ENCODE measurements at regions of chr11 and their contacts with region 1.

Region 1: DNA sequence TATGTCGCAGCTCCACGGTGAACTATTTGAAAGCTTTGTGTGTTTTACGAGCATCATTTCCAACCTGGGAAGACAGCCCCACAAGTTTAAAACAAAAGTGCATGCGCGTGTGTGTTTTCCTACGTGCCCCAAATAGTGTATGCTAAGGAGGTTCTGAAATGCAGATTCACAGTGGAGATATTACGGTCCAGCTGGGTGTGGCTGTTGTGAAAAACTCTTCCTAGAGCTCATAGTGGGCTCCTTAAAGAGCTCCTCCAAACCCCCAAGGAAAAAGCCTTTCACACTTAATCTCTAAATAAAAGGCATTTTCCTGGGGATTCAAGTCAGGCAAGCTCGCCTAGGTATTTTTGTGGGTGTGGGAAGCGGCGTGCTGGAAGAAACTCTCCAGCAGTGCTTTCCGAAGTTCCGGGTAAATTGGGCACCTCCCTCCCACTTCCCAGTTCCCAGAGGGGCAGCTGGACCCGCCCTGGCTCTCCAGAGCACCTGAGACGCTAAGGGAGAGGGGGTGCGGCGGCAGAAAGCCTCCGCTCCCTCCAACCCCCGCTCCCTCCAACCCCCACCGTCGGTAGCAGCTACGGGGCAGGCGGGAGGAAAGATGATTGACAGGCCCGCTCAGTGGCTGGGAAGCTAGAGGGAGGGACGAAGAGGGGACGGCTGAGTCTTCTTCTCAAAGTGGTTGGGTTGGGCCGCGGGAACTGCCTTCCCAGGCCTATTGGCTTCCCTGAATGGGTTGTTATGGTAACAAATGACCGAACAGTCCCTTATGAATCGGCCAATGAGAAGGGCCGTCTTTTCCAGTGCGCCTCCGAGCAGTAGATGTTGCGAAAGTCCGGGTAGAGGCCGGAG is 558 bp upstream of the PCF11 start:
- DNase-seq: peak; percentile 100
- ATAC-seq: peak; percentile 89
- H3K4me3 ChIP-seq: peak overlapping the region; percentile 75
- H3K27ac ChIP-seq: peak overlapping the region; percentile 76
- H3K4me1 ChIP-seq: peaks cover 12% of the 10 kb centered on the region
- H3K27me3 ChIP-seq: no peaks in the 10 kb centered on the region
- CTCF ChIP-seq: no peak

Region 2: GRCh38 chr11:82858556-82859091 is 297.7 kb before region 1 on chr11:
- CTCF ChIA-PET with region 1: no interaction called
- POLR2A ChIA-PET with region 1: no interaction called
- intact Hi-C with region 1: loop called (anchors 5 kb)
- DNase-seq: peak; percentile 98
- ATAC-seq: peak; percentile 80
- H3K4me3 ChIP-seq: peak overlapping the region; percentile 55
- H3K27ac ChIP-seq: peak overlapping the region; percentile 74
- H3K4me1 ChIP-seq: peaks cover 46% of the 10 kb centered on the region
- H3K27me3 ChIP-seq: no peaks in the 10 kb centered on the region
- CTCF ChIP-seq: no peak

Region 3: GRCh38 chr11:83051760-83052671 is 104.4 kb before region 1 on chr11:
- CTCF ChIA-PET with region 1: no interaction called
- POLR2A ChIA-PET with region 1: interaction called, 3 read pairs
- intact Hi-C with region 1: loop called (anchors 1 kb)
- DNase-seq: peak; percentile 97
- ATAC-seq: peak; percentile 81
- H3K4me3 ChIP-seq: peak overlapping the region; percentile 34
- H3K27ac ChIP-seq: peak overlapping the region; percentile 91
- H3K4me1 ChIP-seq: peaks cover 71% of the 10 kb centered on the region
- H3K27me3 ChIP-seq: no peaks in the 10 kb centered on the region
- CTCF ChIP-seq: no peak

Region 4: GRCh38 chr11:83181815-83182214 is 25.4 kb after region 1 on chr11:
- CTCF ChIA-PET with region 1: no interaction called
- POLR2A ChIA-PET with region 1: interaction called, 5 read pairs
- intact Hi-C with region 1: loop called (anchors 1 kb)
- DNase-seq: peak; percentile 41
- ATAC-seq: peak; percentile 80
- H3K4me3 ChIP-seq: no peak overlapping the region
- H3K27ac ChIP-seq: peak overlapping the region; percentile 14; the same call in 1 of the 2 replicates
- H3K4me1 ChIP-seq: no peaks in the 10 kb centered on the region; the same call in 1 of the 2 replicates
- H3K27me3 ChIP-seq: no peaks in the 10 kb centered on the region
- CTCF ChIP-seq: no peak

Region 5: GRCh38 chr11:83285771-83286528 is 129.6 kb after region 1 on chr11 and contains the start of gene CCDC90B:
- CTCF ChIA-PET with region 1: interaction called, 13 read pairs
- POLR2A ChIA-PET with region 1: no interaction called
- intact Hi-C with region 1: no loop called
- DNase-seq: peak; percentile 99
- ATAC-seq: peak; percentile 85
- H3K4me3 ChIP-seq: peak within 1 kb of the TSS; percentile 83
- H3K27ac ChIP-seq: peak within 1 kb of the TSS; percentile 82
- H3K4me1 ChIP-seq: peaks cover 33% of the 10 kb centered on the region
- H3K27me3 ChIP-seq: no peaks in the 10 kb centered on the region
- CTCF ChIP-seq: no peak
- total RNA-seq, gene CCDC90B: 59.4 and 70.8 TPM in 2 replicates